Activated naive CD4-positive, alpha-beta T cell treated with anti-CD3 and anti-CD28 coated beads for 36 hours (primary cell): ENCODE measurements at regions of chr5 and their contacts with region 1.

Region 1: DNA sequence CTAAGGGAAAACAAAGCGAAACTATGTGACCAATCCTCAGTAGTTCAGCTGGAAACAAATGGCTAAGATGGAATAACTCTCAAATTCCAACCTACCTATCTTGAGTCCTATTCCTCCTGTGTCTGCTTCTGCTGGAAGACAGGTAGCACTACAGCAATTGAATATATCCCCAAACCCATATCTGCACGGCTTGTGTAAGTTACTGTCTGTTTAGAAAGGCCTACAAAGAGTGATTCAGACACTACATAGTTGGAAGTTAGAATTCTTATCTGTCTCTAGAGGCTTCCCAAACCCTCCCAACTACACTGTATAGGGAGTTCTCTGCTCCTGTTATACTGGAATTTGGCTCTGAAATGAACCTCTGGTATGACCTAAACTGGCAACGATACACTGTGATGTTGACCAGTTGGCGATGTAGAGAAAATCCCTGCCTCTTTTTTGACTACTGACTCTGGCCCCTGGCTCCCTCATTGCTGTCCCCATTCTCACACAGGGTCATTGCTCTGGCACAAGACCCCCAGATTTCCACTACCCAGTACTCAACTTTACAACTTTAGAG is 22.6 kb upstream of the NADK2 start:
- DNase-seq: no peak
- H3K4me3 Mint-ChIP-seq: no peak overlapping the region
- H3K27ac Mint-ChIP-seq: no peak overlapping the region
- H3K4me1 Mint-ChIP-seq: no peaks in the 10 kb centered on the region
- H3K27me3 Mint-ChIP-seq: peaks cover 23% of the 10 kb centered on the region

Region 2: GRCh38 chr5:36079200-36079761 is 185.0 kb before region 1 on chr5:
- CTCF ChIA-PET with region 1: interaction called, 9 read pairs
- intact Hi-C with region 1: loop called (anchors 1 kb)
- DNase-seq: peak; percentile 47
- H3K4me3 Mint-ChIP-seq: no peak overlapping the region
- H3K27ac Mint-ChIP-seq: no peak overlapping the region
- H3K4me1 Mint-ChIP-seq: no peaks in the 10 kb centered on the region
- H3K27me3 Mint-ChIP-seq: peaks cover 11% of the 10 kb centered on the region

Region 3: GRCh38 chr5:36279054-36279698 is 14.9 kb after region 1 on chr5:
- CTCF ChIA-PET with region 1: interaction called, 18 read pairs
- intact Hi-C with region 1: no loop called
- DNase-seq: no peak
- H3K4me3 Mint-ChIP-seq: no peak overlapping the region
- H3K27ac Mint-ChIP-seq: no peak overlapping the region
- H3K4me1 Mint-ChIP-seq: peaks cover 5% of the 10 kb centered on the region
- H3K27me3 Mint-ChIP-seq: peaks cover 5% of the 10 kb centered on the region

Region 4: GRCh38 chr5:36397901-36398536 is 133.7 kb after region 1 on chr5:
- CTCF ChIA-PET with region 1: no interaction called
- intact Hi-C with region 1: loop called (anchors 1 kb)
- DNase-seq: no peak
- H3K4me3 Mint-ChIP-seq: no peak overlapping the region
- H3K27ac Mint-ChIP-seq: no peak overlapping the region
- H3K4me1 Mint-ChIP-seq: no peaks in the 10 kb centered on the region
- H3K27me3 Mint-ChIP-seq: no peaks in the 10 kb centered on the region

Region 5: GRCh38 chr5:36690041-36690961 is 426.0 kb after region 1 on chr5:
- CTCF ChIA-PET with region 1: interaction called, 10 read pairs
- intact Hi-C with region 1: loop called (anchors 1 kb)
- DNase-seq: peak; percentile 79
- H3K4me3 Mint-ChIP-seq: peak overlapping the region; percentile 81
- H3K27ac Mint-ChIP-seq: no peak overlapping the region
- H3K4me1 Mint-ChIP-seq: peaks cover 12% of the 10 kb centered on the region
- H3K27me3 Mint-ChIP-seq: peaks cover 37% of the 10 kb centered on the region